Common myeloid progenitor, CD34-positive (primary cell): ENCODE measurements at regions of chr9 and their contacts with region 1.

Region 1: GRCh38 chr9:113578882-113579282 is 115.4 kb downstream of the RGS3 start:
- DNase-seq: peak; percentile 73 to 96 (median 94)
- H3K4me3 ChIP-seq: peak overlapping the region in 3 of 7 experiments; percentile 26 to 28 (median 26)
- H3K27ac ChIP-seq: peak overlapping the region; percentile 27 to 44
- H3K4me1 ChIP-seq: peaks cover 24 to 65% (median 57%) of the 10 kb centered on the region in 4 experiments
- H3K27me3 ChIP-seq: no peaks in the 10 kb centered on the region

Region 2: DNA sequence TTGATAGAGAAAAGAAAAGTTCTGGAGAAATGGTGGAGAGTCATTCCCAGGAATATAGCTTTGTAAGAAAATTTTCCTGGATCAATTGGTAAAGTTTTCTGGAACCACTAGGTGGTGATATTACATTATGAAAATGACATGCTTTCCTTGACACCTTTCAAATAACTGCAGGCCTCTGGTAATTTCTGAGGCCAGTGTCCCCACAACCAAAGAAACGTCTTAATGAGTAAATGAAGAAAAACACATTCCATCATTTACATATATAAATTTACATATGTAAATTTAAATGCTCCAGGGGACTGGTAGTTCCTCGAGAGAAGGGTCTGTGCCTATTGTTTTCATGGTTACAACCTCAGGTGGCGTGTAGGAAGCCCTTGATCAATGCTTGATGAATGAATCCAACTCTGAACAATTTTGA is 132.6 kb before region 1 on chr9:
- CTCF ChIA-PET with region 1: interaction called, 29 read pairs
- POLR2A ChIA-PET with region 1: interaction called, 3 read pairs
- DNase-seq: peak; percentile 21 to 47 (median 45)
- H3K4me3 ChIP-seq: no peak overlapping the region
- H3K27ac ChIP-seq: no peak overlapping the region
- H3K4me1 ChIP-seq: peaks cover 4 to 18% (median 16%) of the 10 kb centered on the region in 4 experiments
- H3K27me3 ChIP-seq: no peaks in the 10 kb centered on the region

Region 3: DNA sequence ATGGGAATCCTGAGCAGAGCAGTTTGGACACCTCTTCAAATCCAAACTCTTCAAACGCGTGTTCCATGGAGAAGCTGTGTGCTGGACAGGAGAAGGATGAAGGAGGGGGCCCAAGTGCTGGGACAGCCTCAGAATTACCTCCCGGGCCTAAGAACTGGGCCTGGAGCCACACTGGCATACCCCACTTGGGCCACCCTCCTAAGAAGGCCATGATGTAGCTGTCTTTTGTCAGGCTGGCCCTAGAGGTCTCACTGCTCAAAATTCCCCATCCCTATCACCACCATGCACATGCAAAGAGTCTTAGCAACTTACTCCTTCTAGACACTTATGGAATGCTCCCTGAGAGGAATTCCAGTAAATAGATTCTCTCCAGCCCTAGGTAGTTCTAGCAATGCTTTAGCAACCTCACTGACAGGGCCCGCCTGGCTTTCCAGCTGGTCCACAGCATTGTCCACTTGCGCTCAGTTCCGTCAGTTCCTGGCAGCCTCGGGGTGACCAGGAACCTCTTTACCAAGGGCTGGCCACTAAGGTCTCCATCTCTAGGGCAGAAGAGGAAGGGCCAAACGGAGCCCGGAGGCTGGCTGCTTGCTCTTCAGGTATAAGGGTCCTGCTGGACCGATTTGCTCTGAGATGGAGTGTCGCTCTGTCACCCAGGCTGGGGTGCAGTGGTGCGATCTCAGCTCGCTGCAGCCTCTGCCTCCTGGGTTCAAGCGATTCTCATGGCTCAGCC is 40.0 kb before region 1 on chr9:
- CTCF ChIA-PET with region 1: no interaction called
- POLR2A ChIA-PET with region 1: no interaction called
- DNase-seq: no peak
- H3K4me3 ChIP-seq: no peak overlapping the region
- H3K27ac ChIP-seq: no peak overlapping the region
- H3K4me1 ChIP-seq: no peaks in the 10 kb centered on the region
- H3K27me3 ChIP-seq: no peaks in the 10 kb centered on the region

Region 4: GRCh38 chr9:113564498-113565237 is 14.2 kb before region 1 on chr9:
- CTCF ChIA-PET with region 1: interaction called, 54 read pairs
- POLR2A ChIA-PET with region 1: interaction called, 3 read pairs
- DNase-seq: no peak
- H3K4me3 ChIP-seq: peak overlapping the region in 3 of 7 experiments; percentile 49 to 68 (median 51)
- H3K27ac ChIP-seq: no peak overlapping the region
- H3K4me1 ChIP-seq: peaks cover 0 to 27% (median 16%) of the 10 kb centered on the region in 4 experiments
- H3K27me3 ChIP-seq: no peaks in the 10 kb centered on the region

Region 5: DNA sequence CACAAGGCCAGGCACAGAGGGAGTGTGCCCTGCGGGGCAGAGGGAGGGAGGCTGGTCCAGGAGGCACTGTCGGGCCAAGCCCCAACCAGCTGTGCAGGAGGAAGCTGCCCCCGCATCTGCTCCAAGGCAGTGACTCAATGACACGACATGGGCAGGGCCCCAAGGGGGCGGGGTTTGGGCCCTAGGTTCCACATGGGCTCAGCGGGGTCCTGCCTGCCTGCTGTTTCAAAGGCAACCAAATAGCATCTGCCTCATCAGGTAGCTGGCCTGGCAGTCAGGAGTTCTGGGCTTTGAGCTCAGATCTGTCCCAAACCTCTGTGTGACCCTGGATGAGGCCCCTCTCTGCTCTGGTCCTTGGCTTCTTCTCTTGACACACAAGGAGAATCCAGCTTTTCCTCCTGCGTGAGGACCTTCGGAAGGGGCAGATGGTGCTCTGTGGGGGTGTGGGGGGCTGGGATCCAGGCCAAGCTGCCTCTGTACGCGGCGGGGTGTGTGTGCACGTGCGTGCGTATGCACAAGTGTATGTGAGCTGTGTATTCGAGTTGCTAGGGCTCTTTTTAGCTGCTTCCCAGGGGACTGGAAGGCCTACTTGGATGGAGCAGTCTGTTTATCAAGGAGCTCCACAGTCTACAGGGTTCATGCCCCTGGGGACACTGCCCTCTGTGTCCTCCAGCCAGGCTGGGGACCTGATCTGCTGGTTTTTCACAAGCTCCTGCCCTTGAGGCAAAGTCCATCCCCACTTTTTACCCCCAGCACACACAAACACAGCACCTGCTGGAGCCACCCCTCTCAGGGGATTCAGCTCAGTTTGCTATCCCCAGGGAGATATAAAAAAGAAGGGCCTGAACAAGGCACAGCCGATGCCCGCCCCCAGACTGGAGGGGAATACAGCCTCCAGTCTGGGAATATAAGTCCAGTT is 23.5 kb after region 1 on chr9:
- CTCF ChIA-PET with region 1: no interaction called
- POLR2A ChIA-PET with region 1: no interaction called
- DNase-seq: peak in 2 of 3 donors; percentile 80 to 82
- H3K4me3 ChIP-seq: no peak overlapping the region
- H3K27ac ChIP-seq: no peak overlapping the region
- H3K4me1 ChIP-seq: peaks cover 0 to 22% (median 3%) of the 10 kb centered on the region in 4 experiments
- H3K27me3 ChIP-seq: no peaks in the 10 kb centered on the region

Region 6: GRCh38 chr9:113712023-113712422 is 133.1 kb after region 1 on chr9:
- CTCF ChIA-PET with region 1: no interaction called
- POLR2A ChIA-PET with region 1: no interaction called
- DNase-seq: no peak
- H3K4me3 ChIP-seq: no peak overlapping the region
- H3K27ac ChIP-seq: no peak overlapping the region
- H3K4me1 ChIP-seq: no peaks in the 10 kb centered on the region
- H3K27me3 ChIP-seq: no peaks in the 10 kb centered on the region